ENCODE measurements at regions of chr5 and their contacts with region 1.

Region 1: DNA sequence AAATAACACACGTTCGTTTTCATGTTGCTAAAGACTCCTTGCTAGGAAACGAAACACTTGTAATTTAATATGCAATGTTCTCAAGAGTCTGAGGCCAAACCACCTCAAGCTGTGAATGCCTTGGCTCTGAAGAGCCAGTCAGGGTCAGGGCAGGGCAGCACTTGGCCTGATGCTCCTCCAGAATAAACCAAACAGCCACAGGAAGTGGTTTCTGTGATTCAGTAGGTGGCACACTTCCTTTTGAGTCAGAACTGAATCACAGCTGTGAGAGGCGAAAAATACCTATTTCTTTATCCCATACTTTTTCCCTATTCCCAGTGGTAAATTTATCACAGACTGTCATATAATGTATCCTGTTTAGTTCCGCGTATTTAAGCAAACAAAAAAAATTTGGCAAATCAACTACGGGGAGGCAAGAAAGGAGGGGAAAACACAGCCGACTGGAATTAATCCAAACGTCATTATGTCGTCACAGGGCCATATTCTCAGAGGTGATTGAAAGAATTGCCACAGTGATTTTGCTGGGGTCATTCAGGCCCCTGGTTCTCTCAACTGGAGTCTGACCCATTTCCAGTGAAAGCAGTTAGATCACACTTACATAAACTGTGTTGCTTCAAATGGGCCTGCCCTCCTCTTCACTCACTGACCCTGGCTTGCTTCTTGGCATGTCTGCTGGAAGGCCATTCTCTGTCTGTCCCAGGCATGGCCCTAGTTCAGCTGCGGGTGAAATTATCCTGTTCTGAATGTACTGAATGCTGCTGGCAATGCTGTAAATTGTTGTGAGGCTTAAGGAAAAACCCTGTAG is 71.2 kb downstream of the ARRDC3 start:
- DNase-seq: peak; percentile 94
- ATAC-seq: peak; percentile 87
- H3K4me3 ChIP-seq: peak overlapping the region; percentile 17; the same call in 1 of the 2 replicates
- H3K27ac ChIP-seq: peak overlapping the region; percentile 98
- H3K4me1 ChIP-seq: peaks cover 39% of the 10 kb centered on the region
- H3K27me3 ChIP-seq: no peaks in the 10 kb centered on the region
- CTCF ChIP-seq: no peak

Region 2: DNA sequence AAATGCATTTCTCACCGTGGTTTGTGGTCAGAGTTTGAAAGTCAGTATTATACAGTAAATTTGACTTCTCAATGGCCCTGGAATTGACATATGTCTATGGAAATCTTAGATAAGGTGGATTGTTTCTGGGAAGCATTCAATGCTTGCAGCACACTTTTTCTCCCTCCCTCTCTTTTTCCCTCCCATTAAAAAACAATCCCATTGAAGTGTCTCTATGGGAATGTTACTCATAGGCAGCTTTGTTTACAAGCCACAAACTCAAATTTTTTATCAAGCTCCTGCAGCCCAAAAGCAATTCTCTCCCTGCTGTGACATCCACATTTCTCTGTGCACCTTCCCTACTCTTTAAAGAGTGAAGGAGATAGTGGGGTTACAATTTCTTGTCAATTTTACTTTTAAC is 220.9 kb before region 1 on chr5:
- CTCF ChIA-PET with region 1: no interaction called
- POLR2A ChIA-PET with region 1: no interaction called
- intact Hi-C with region 1: no loop called
- DNase-seq: no peak
- ATAC-seq: peak; percentile 54
- H3K4me3 ChIP-seq: no peak overlapping the region
- H3K27ac ChIP-seq: no peak overlapping the region
- H3K4me1 ChIP-seq: no peaks in the 10 kb centered on the region
- H3K27me3 ChIP-seq: no peaks in the 10 kb centered on the region
- CTCF ChIP-seq: no peak

Region 3: GRCh38 chr5:91266184-91266705 is 45.7 kb before region 1 on chr5:
- CTCF ChIA-PET with region 1: no interaction called
- POLR2A ChIA-PET with region 1: no interaction called
- intact Hi-C with region 1: loop called (anchors 1 kb)
- DNase-seq: peak; percentile 61
- ATAC-seq: peak; percentile 79
- H3K4me3 ChIP-seq: no peak overlapping the region
- H3K27ac ChIP-seq: no peak overlapping the region
- H3K4me1 ChIP-seq: peaks cover 9% of the 10 kb centered on the region; the same call in 1 of the 2 replicates
- H3K27me3 ChIP-seq: no peaks in the 10 kb centered on the region
- CTCF ChIP-seq: peak; percentile 19; the same call in 1 of the 2 replicates